Dorsolateral prefrontal cortex (tissue), 120 donors: ENCODE measurements at regions of chr12 and their contacts with region 1.

Region 1: GRCh38 chr12:122003651-122004611 is 17.8 kb upstream of the BCL7A start:
- DNase-seq: no peak
- H3K4me3 ChIP-seq: no peak overlapping the region
- H3K27ac ChIP-seq: peak overlapping the region in 27 of 59 donors; percentile 0 to 91 (median 61)
- H3K27me3 ChIP-seq: no peaks in the 10 kb centered on the region
- CTCF ChIP-seq: no peak

Region 2: DNA sequence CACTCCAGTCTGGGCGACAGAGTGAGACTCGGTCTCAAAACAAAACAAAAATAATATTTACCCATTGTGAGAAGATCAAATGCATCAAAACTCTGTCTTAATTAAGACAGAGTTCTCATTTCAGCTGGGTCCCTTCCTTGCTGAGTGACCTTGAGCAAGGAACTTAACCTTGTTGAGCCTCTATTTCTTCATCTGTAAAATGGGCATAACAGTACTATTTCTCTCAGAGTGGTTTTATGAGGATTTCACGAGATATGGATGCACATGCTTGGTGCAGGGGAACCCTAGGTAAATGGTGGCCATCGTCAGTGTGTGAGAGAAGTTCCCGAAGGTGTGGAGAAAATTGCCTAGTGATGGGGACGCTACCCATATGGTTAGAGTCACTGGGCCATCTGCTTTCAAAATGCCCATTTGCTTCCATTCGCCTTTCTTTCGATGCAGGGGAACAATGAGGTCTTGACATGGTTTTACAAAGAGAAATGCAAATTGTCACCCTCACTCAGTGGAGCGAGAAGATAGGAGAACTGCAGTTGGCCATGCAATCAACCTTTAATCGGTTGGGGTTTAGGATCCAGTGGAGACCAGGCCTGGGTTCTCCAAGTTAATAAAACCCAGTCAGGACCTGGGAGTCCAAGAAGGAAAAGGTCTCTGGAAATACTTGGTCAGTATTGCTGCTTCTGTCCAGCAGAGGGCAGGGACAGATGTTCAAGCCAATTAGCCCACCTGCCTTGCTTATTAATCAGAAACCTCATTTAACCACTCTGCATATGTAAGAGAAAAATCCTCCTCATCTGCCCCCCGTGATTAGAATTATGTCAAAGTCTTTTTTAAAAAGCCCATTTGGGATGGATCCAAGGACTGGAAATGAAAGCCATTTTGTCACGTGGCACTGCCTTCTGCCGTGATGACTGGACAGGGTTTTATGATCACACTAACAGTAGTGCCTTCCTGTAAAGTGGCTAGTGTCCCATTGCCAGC is 48.4 kb before region 1 on chr12:
- intact Hi-C with region 1: loop called in 1 of 2 experiments (anchors 5 kb)
- DNase-seq: no peak
- H3K4me3 ChIP-seq: peak overlapping the region in 16 of 59 donors; percentile 4 to 44 (median 23)
- H3K27ac ChIP-seq: no peak overlapping the region
- H3K27me3 ChIP-seq: no peaks in the 10 kb centered on the region
- CTCF ChIP-seq: peak in 54 of 56 donors; percentile 25 to 68 (median 52)